CD4-positive, alpha-beta memory T cell (primary cell): ENCODE measurements at regions of chr22 and their contacts with region 1.

Region 1: DNA sequence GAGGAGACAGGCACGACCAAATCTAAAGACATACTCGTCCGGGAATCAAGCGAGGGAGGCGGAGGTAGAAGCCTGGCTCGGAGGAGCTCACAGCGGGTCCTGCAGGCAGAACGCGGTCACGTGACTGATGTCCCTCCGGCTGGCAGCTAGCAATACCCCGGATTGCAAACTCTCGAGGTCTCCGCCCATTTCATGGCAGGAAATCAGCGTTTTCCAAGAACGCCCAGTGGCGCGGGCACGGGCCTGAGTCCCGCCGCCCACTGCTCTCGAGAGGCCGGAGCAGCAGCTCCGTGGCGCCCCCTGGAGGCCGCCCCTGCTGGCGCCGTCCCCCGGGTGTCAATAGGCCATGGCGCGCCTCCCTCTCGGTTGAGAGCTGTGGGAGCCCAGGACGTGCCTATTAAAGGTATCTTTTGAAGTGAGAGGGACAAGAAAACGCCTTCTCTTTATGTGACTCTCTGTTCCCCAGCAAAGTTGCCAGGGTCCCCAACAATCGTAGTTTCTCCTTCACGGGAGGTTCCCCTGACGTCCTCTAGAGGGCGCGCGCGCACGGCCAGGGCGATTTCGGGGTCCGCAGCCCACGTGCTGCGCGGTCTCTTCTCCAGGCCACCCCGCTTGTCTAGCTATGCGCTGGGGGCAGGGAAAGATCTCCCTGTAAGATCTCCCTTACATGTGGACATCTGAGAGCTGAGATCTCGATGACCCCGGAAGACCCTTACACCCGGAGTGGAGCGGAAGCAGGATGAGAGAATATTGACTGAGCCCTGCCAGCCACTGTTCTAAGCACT is 37.3 kb upstream of the RBFOX2 start:
- DNase-seq: peak; percentile 55 to 64 (median 60)
- H3K4me3 ChIP-seq: peak overlapping the region; percentile 49 to 67
- H3K4me3 Mint-ChIP-seq: peak overlapping the region; percentile 82 to 91 (median 86)
- H3K27ac ChIP-seq: peak overlapping the region; percentile 15
- H3K27ac Mint-ChIP-seq: peak overlapping the region; percentile 42 to 91 (median 79)
- H3K4me1 ChIP-seq: peaks cover 11% of the 10 kb centered on the region
- H3K4me1 Mint-ChIP-seq: peaks cover 6 to 10% (median 9%) of the 10 kb centered on the region in 4 donors
- H3K27me3 ChIP-seq: no peaks in the 10 kb centered on the region
- H3K27me3 Mint-ChIP-seq: peaks cover 0 to 2% of the 10 kb centered on the region in 2 donors

Region 2: DNA sequence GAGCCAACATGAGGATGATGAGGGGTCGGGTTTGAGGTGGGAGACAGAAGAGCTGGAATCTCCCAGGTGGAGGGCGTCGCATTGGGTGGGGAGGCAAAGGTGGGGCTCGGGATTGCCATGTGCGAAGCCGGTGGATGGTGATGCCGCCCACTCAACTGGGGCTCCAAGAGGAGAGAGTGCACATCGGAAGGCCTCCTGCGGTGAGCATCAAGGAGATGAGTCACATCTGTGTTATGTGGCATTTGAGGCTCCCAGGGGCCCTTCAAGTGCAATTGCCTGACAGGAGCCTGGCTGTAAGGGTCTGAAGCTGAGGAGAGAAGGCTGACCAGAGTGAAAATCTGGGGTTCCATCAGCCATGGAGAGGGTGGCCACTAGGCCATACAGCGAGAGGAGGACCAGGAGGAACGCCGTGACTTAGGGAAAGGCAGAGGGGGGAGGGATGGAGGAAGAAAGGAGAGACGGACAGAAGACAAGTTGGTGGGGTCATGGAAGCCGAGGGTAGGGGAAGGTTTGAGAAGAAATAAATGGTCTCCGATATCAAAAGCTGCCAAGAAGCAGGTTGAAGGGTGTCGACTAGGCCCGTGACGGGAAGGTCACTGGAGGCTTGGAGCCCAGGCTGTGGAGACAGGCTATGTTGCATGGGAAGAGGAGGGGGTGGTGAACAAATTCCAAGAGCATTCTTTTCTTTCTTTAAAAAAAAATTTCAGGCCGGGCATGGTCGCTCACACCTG is 504.0 kb before region 1 on chr22:
- CTCF ChIA-PET with region 1: no interaction called
- POLR2A ChIA-PET with region 1: no interaction called
- intact Hi-C with region 1: no loop called
- DNase-seq: no peak
- H3K4me3 ChIP-seq: no peak overlapping the region
- H3K4me3 Mint-ChIP-seq: peak overlapping the region in 1 of 8 donors; percentile 54
- H3K27ac ChIP-seq: no peak overlapping the region
- H3K27ac Mint-ChIP-seq: peak overlapping the region in 1 of 7 donors; percentile 67
- H3K4me1 ChIP-seq: no peaks in the 10 kb centered on the region
- H3K4me1 Mint-ChIP-seq: no peaks in the 10 kb centered on the region
- H3K27me3 ChIP-seq: no peaks in the 10 kb centered on the region
- H3K27me3 Mint-ChIP-seq: peaks cover 20 to 35% of the 10 kb centered on the region in 2 donors

Region 3: DNA sequence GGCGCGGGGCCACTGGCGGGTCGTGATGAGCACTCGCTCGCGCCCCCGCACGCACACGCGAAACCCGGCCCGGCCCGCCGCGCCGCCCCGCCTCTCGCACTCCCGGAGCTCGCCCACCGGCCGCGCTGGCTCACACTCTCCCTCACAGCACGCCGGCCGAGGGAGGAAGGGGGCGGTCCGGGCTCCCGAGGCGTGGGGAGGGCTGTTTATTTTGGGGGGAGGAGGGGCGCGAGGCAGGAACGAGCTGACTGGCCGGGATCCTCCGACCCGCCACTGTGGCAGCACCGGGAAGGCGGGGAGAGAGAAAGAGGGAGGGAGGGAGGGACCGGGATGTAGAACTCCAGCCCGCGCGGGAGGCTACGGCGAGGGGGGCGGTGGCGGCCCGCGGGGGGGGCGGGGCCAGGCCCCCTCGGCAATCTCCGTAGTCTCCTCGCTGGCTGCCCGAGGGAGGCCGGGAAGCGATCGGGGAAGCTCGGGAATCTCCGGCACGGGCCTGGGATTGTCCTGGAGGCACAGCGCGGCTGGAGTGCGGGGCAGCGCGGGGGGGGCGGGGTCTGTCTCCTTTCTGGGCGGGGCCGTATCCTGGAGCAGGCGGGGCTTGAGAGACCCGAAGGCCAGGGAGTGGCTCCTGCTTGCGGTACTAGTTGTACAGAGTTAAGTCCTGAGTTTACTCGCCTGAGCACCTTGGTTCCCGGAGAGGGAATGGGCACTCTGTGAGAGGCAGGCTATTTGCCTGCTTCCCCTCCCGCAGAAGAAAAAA is 37.1 kb before region 1 on chr22 and contains the start of gene RBFOX2:
- CTCF ChIA-PET with region 1: interaction called, 19 read pairs
- POLR2A ChIA-PET with region 1: interaction called, 8 read pairs
- intact Hi-C with region 1: loop called (anchors 1 kb)
- DNase-seq: peak; percentile 40 to 66 (median 49)
- H3K4me3 ChIP-seq: peak within 1 kb of the TSS in 1 of 2 donors; percentile 45
- H3K4me3 Mint-ChIP-seq: peak within 1 kb of the TSS; percentile 86 to 96 (median 91)
- H3K27ac ChIP-seq: no peak within 1 kb of the TSS
- H3K27ac Mint-ChIP-seq: peak within 1 kb of the TSS; percentile 69 to 94 (median 80)
- H3K4me1 ChIP-seq: peaks cover 12% of the 10 kb centered on the region
- H3K4me1 Mint-ChIP-seq: peaks cover 15 to 23% (median 19%) of the 10 kb centered on the region in 4 donors
- H3K27me3 ChIP-seq: no peaks in the 10 kb centered on the region
- H3K27me3 Mint-ChIP-seq: peaks cover 4 to 9% of the 10 kb centered on the region in 2 donors
- total RNA-seq, gene RBFOX2: 0.99 to 1.0 TPM

Region 4: GRCh38 chr22:36077271-36077670 is 11.3 kb after region 1 on chr22:
- CTCF ChIA-PET with region 1: interaction called, 32 read pairs
- POLR2A ChIA-PET with region 1: interaction called, 3 read pairs
- intact Hi-C with region 1: no loop called
- DNase-seq: no peak
- H3K4me3 ChIP-seq: no peak overlapping the region
- H3K4me3 Mint-ChIP-seq: no peak overlapping the region
- H3K27ac ChIP-seq: no peak overlapping the region
- H3K27ac Mint-ChIP-seq: peak overlapping the region in 1 of 7 donors; percentile 28
- H3K4me1 ChIP-seq: no peaks in the 10 kb centered on the region
- H3K4me1 Mint-ChIP-seq: no peaks in the 10 kb centered on the region
- H3K27me3 ChIP-seq: no peaks in the 10 kb centered on the region
- H3K27me3 Mint-ChIP-seq: peaks cover 1 to 2% of the 10 kb centered on the region in 2 donors

Region 5: DNA sequence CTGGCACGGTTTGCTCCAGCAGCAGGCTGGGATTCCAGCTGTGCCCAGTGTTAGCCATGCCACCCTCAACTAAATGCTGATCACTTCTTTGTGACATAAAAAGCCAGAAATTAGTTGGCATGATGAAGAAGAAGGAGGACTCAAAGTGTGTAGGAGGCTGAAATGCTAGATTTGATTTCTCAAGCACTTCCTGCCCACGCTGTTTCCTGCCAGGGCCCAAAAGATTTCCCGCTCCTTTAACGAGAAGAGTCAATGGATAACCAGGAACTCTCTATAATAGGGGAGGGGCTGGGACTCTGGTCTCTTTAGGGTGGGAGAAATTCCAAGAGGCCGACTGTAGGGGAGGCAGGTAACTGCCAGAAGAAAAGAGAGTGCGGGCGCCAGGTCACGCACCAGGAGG is 68.2 kb after region 1 on chr22:
- CTCF ChIA-PET with region 1: interaction called, 10 read pairs
- POLR2A ChIA-PET with region 1: no interaction called
- intact Hi-C with region 1: no loop called
- DNase-seq: no peak
- H3K4me3 ChIP-seq: no peak overlapping the region
- H3K4me3 Mint-ChIP-seq: no peak overlapping the region
- H3K27ac ChIP-seq: no peak overlapping the region
- H3K27ac Mint-ChIP-seq: peak overlapping the region in 2 of 7 donors; percentile 12 to 30
- H3K4me1 ChIP-seq: peaks cover 11% of the 10 kb centered on the region
- H3K4me1 Mint-ChIP-seq: peaks cover 8 to 28% (median 18%) of the 10 kb centered on the region in 4 donors
- H3K27me3 ChIP-seq: no peaks in the 10 kb centered on the region
- H3K27me3 Mint-ChIP-seq: no peaks in the 10 kb centered on the region

Region 6: DNA sequence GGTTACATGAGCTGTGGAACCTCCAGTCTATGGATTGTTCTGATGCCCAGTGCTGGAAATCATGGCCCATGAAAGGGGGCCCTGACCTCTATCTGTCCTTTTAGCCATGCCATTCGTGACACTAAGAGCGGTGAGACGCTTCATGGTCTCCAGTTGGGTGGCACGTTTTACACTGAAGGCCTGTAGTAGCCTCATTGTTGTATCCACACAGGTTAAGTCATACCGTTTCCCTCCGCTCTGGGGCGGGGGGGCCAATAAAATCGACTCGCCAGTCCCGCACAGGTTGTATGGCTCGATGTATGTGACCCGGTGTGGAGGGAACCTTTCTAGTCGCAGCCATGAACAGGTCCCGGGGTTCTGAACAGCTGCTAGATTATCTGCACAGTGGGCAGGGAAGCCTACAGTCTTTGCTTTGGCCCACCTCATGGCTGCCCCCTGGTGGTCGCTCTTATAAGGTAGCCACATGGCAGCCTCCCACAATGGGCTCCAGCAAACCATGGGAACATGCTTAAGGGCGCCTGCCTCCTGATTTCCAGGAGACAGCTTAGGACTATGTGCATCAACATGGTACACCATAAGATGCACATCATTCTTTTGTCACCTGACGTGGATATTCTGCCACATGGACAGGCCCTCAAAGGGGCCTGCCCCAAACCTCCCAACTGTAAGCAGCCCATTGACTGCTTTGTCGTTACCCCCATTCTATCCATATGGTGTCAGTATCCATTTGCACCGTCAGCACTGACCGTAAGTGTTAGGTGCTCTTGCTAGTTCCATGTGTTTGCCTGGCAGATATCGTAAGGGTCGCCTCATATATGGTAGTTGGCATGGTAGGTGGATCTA is 114.3 kb after region 1 on chr22:
- CTCF ChIA-PET with region 1: interaction called, 67 read pairs
- POLR2A ChIA-PET with region 1: no interaction called
- intact Hi-C with region 1: loop called (anchors 1 kb)
- DNase-seq: peak; percentile 75 to 82 (median 80)
- H3K4me3 ChIP-seq: no peak overlapping the region
- H3K4me3 Mint-ChIP-seq: no peak overlapping the region
- H3K27ac ChIP-seq: no peak overlapping the region
- H3K27ac Mint-ChIP-seq: peak overlapping the region in 6 of 7 donors; percentile 19 to 86 (median 54)
- H3K4me1 ChIP-seq: peaks cover 5% of the 10 kb centered on the region
- H3K4me1 Mint-ChIP-seq: peaks cover 0 to 6% (median 3%) of the 10 kb centered on the region in 4 donors
- H3K27me3 ChIP-seq: no peaks in the 10 kb centered on the region
- H3K27me3 Mint-ChIP-seq: peaks cover 2 to 3% of the 10 kb centered on the region in 2 donors